Right ventricle myocardium inferior (tissue), 1 donor: ENCODE measurements at regions of chr7 and their contacts with region 1.

Region 1: GRCh38 chr7:94368371-94368791 is 26.3 kb upstream of the COL1A2 start:
- DNase-seq: no peak
- ATAC-seq: peak; percentile 44

Region 2: DNA sequence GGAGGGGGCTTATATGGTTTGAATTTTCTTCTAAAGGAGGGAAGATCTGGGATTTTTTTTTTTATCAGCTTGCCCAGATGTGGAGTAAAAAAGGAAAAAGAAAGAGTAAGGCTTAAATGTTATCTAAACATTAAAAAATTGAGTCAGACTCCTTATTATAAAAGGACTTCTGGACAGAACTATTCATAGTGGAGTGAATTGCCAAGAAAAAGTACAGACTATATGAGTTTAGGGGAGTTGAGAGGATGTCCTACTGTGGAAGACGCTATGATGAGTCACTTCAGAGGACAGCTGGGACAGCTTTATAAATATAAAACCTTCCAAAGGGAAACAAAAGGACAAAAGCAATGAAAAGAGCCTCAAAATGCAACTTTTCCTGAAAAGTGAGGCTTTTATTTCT is 550.9 kb before region 1 on chr7:
- intact Hi-C with region 1: no loop called
- DNase-seq: no peak
- ATAC-seq: no peak

Region 3: DNA sequence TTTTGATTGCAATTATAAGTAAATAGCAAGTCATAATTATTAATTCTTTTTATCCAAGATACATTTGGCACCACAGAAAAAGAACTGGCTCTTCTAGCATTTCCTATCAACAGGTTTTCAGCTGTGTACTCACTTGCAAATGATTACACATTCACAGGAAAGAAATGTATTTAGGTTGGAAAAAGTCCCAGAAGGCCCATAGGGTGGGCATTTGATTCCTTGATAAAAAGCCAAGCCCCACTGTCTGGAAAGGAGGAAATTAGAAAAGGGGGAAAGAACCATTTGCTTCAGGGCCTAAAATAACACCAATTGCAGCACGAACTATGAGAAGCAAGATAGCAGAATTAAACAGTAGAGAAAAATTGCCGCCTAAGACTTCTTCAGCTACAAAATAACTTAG is 54.5 kb before region 1 on chr7:
- intact Hi-C with region 1: loop called (anchors 5 kb)
- DNase-seq: no peak
- ATAC-seq: no peak

Region 4: GRCh38 chr7:94350733-94351132 is 17.6 kb before region 1 on chr7:
- intact Hi-C with region 1: loop called (anchors 1 kb)
- DNase-seq: no peak
- ATAC-seq: no peak